ENCODE measurements at regions of chr11 and their contacts with region 1.

Region 1: GRCh38 chr11:67630228-67630942 is 648 bp upstream of the NUDT8 start:
- DNase-seq: peak; percentile 86 to 99 (median 94)
- ATAC-seq: peak; percentile 64
- H3K4me3 ChIP-seq: peak overlapping the region; percentile 90
- H3K4me3 Mint-ChIP-seq: peak overlapping the region; percentile 94
- H3K27ac ChIP-seq: peak overlapping the region; percentile 61 to 92
- H3K27ac Mint-ChIP-seq: peak overlapping the region; percentile 89
- H3K4me1 ChIP-seq: peaks cover 22% of the 10 kb centered on the region
- H3K4me1 Mint-ChIP-seq: peaks cover 6% of the 10 kb centered on the region
- H3K27me3 ChIP-seq: no peaks in the 10 kb centered on the region
- H3K27me3 Mint-ChIP-seq: no peaks in the 10 kb centered on the region
- CTCF ChIP-seq: peak; percentile 77

Region 2: DNA sequence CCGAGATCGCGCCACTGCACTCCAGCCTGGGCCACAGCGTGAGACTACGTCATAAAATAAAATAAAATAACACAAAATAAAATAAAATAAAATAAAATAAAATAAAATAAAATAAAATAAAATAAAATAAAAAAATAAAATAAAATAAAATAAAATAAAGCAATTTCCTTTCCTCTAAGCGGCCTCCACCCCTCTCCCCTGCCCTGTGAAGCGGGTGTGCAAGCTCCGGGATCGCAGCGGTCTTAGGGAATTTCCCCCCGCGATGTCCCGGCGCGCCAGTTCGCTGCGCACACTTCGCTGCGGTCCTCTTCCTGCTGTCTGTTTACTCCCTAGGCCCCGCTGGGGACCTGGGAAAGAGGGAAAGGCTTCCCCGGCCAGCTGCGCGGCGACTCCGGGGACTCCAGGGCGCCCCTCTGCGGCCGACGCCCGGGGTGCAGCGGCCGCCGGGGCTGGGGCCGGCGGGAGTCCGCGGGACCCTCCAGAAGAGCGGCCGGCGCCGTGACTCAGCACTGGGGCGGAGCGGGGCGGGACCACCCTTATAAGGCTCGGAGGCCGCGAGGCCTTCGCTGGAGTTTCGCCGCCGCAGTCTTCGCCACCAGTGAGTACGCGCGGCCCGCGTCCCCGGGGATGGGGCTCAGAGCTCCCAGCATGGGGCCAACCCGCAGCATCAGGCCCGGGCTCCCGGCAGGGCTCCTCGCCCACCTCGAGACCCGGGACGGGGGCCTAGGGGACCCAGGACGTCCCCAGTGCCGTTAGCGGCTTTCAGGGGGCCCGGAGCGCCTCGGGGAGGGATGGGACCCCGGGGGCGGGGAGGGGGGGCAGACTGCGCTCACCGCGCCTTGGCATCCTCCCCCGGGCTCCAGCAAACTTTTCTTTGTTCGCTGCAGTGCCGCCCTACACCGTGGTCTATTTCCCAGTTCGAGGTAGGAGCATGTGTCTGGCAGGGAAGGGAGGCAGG is 46.9 kb before region 1 on chr11 and contains the start of gene GSTP1:
- CTCF ChIA-PET with region 1: interaction called, 9 read pairs
- POLR2A ChIA-PET with region 1: interaction called, 16 read pairs
- intact Hi-C with region 1: no loop called
- DNase-seq: peak; percentile 54 to 90 (median 72)
- ATAC-seq: peak; percentile 77
- H3K4me3 ChIP-seq: peak within 1 kb of the TSS; percentile 58
- H3K4me3 Mint-ChIP-seq: peak within 1 kb of the TSS; percentile 92
- H3K27ac ChIP-seq: peak within 1 kb of the TSS; percentile 64 to 68
- H3K27ac Mint-ChIP-seq: peak within 1 kb of the TSS; percentile 85
- H3K4me1 ChIP-seq: peaks cover 34% of the 10 kb centered on the region
- H3K4me1 Mint-ChIP-seq: peaks cover 47% of the 10 kb centered on the region
- H3K27me3 ChIP-seq: peaks cover 0 to 3% of the 10 kb centered on the region in 2 experiments
- H3K27me3 Mint-ChIP-seq: no peaks in the 10 kb centered on the region
- CTCF ChIP-seq: peak; percentile 55
- total RNA-seq, gene GSTP1: 60.1 to 62.8 TPM

Region 3: GRCh38 chr11:67606492-67607201 is 23.7 kb before region 1 on chr11 and contains the start of gene NDUFV1:
- CTCF ChIA-PET with region 1: interaction called, 9 read pairs
- POLR2A ChIA-PET with region 1: interaction called, 3 read pairs
- intact Hi-C with region 1: loop called in 1 of 2 experiments (anchors 1 kb)
- DNase-seq: peak; percentile 93 to 98 (median 96)
- ATAC-seq: peak; percentile 98
- H3K4me3 ChIP-seq: peak within 1 kb of the TSS; percentile 83
- H3K4me3 Mint-ChIP-seq: peak within 1 kb of the TSS; percentile 88
- H3K27ac ChIP-seq: peak within 1 kb of the TSS; percentile 64 to 79
- H3K27ac Mint-ChIP-seq: peak within 1 kb of the TSS; percentile 70
- H3K4me1 ChIP-seq: peaks cover 23% of the 10 kb centered on the region
- H3K4me1 Mint-ChIP-seq: peaks cover 9% of the 10 kb centered on the region
- H3K27me3 ChIP-seq: peaks cover 0 to 3% of the 10 kb centered on the region in 2 experiments
- H3K27me3 Mint-ChIP-seq: peaks cover 11% of the 10 kb centered on the region
- CTCF ChIP-seq: peak; percentile 81
- total RNA-seq, gene NDUFV1: 223 to 224 TPM

Region 4: GRCh38 chr11:67613960-67614715 is 16.2 kb before region 1 on chr11:
- CTCF ChIA-PET with region 1: interaction called, 38 read pairs
- POLR2A ChIA-PET with region 1: interaction called, 27 read pairs
- intact Hi-C with region 1: loop called in 1 of 2 experiments (anchors 1 kb)
- DNase-seq: peak; percentile 67 to 94 (median 78)
- ATAC-seq: peak; percentile 96
- H3K4me3 ChIP-seq: peak overlapping the region; percentile 55
- H3K4me3 Mint-ChIP-seq: peak overlapping the region; percentile 89
- H3K27ac ChIP-seq: peak overlapping the region; percentile 92
- H3K27ac Mint-ChIP-seq: peak overlapping the region; percentile 96
- H3K4me1 ChIP-seq: peaks cover 37% of the 10 kb centered on the region
- H3K4me1 Mint-ChIP-seq: peaks cover 33% of the 10 kb centered on the region
- H3K27me3 ChIP-seq: peaks cover 0 to 3% of the 10 kb centered on the region in 2 experiments
- H3K27me3 Mint-ChIP-seq: no peaks in the 10 kb centered on the region
- CTCF ChIP-seq: peak; percentile 60

Region 5: GRCh38 chr11:67648140-67649123 is 18.0 kb after region 1 on chr11:
- CTCF ChIA-PET with region 1: interaction called, 9 read pairs
- POLR2A ChIA-PET with region 1: interaction called, 51 read pairs
- intact Hi-C with region 1: loop called in 1 of 2 experiments (anchors 1 kb)
- DNase-seq: peak; percentile 21 to 78 (median 51)
- ATAC-seq: peak; percentile 92
- H3K4me3 ChIP-seq: no peak overlapping the region
- H3K4me3 Mint-ChIP-seq: peak overlapping the region; percentile 76
- H3K27ac ChIP-seq: no peak overlapping the region
- H3K27ac Mint-ChIP-seq: peak overlapping the region; percentile 27
- H3K4me1 ChIP-seq: peaks cover 48% of the 10 kb centered on the region
- H3K4me1 Mint-ChIP-seq: peaks cover 32% of the 10 kb centered on the region
- H3K27me3 ChIP-seq: no peaks in the 10 kb centered on the region
- H3K27me3 Mint-ChIP-seq: no peaks in the 10 kb centered on the region
- CTCF ChIP-seq: peak; percentile 48

Region 6: DNA sequence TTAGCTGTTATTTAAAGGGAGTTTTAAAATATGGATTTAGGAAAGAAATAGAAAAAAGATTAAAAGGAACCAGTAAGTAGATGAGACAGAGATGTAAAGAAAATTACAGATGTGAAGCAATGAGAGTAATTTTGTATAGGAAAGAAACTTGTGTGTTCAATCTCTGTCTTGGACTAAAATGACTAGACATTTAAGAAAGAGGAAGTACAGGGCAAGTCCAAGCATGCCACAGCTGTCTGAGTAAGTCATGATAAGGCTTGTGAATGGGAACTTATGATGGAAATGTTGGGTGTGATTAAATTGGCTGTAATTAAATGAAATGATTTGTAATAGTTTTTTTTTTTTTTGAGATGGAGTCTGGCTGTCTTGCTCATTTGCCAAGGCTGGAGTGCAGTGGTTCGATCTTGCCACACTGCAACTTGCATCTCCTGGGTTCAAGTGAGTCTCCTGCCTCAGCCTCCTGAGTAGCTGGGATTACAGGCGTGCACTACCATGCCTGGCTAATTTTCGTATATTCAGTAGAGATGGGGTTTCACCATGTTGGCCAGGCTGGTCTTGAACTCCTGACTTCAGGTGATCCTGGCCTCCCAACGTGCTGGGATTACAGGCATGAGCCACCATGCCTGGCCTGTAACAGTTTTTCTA is 26.0 kb after region 1 on chr11:
- CTCF ChIA-PET with region 1: interaction called, 28 read pairs
- POLR2A ChIA-PET with region 1: interaction called, 51 read pairs
- intact Hi-C with region 1: loop called (anchors 1 kb)
- DNase-seq: peak in 1 of 14 experiments; percentile 14
- ATAC-seq: no peak
- H3K4me3 ChIP-seq: no peak overlapping the region
- H3K4me3 Mint-ChIP-seq: no peak overlapping the region
- H3K27ac ChIP-seq: no peak overlapping the region
- H3K27ac Mint-ChIP-seq: no peak overlapping the region
- H3K4me1 ChIP-seq: peaks cover 3% of the 10 kb centered on the region
- H3K4me1 Mint-ChIP-seq: no peaks in the 10 kb centered on the region
- H3K27me3 ChIP-seq: no peaks in the 10 kb centered on the region
- H3K27me3 Mint-ChIP-seq: no peaks in the 10 kb centered on the region
- CTCF ChIP-seq: no peak

Region 7: DNA sequence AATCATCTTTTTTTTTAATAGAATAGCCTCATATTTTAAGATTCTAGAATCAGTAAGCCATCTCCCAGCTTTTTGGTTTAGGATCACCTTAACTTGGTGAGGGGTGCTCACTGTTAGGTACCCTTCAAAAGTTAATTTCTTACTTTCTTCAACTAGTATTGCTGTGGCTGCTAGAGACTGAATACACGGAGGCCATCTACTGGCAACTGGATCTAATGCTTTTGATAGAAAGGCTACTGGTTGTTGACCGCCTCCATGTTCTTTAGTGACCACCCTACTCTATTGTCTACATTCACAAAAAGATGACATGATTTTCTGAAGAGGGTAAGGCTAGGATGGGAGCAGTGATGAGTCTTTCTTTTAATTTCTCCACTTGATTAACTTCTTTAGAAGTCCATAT is 60.8 kb after region 1 on chr11:
- CTCF ChIA-PET with region 1: no interaction called
- POLR2A ChIA-PET with region 1: no interaction called
- intact Hi-C with region 1: no loop called
- DNase-seq: no peak
- ATAC-seq: no peak
- H3K4me3 ChIP-seq: no peak overlapping the region
- H3K4me3 Mint-ChIP-seq: no peak overlapping the region
- H3K27ac ChIP-seq: no peak overlapping the region
- H3K27ac Mint-ChIP-seq: no peak overlapping the region
- H3K4me1 ChIP-seq: no peaks in the 10 kb centered on the region
- H3K4me1 Mint-ChIP-seq: no peaks in the 10 kb centered on the region
- H3K27me3 ChIP-seq: peaks cover 3 to 14% of the 10 kb centered on the region in 2 experiments
- H3K27me3 Mint-ChIP-seq: peaks cover 26% of the 10 kb centered on the region
- CTCF ChIP-seq: peak; percentile 27

Region 8: DNA sequence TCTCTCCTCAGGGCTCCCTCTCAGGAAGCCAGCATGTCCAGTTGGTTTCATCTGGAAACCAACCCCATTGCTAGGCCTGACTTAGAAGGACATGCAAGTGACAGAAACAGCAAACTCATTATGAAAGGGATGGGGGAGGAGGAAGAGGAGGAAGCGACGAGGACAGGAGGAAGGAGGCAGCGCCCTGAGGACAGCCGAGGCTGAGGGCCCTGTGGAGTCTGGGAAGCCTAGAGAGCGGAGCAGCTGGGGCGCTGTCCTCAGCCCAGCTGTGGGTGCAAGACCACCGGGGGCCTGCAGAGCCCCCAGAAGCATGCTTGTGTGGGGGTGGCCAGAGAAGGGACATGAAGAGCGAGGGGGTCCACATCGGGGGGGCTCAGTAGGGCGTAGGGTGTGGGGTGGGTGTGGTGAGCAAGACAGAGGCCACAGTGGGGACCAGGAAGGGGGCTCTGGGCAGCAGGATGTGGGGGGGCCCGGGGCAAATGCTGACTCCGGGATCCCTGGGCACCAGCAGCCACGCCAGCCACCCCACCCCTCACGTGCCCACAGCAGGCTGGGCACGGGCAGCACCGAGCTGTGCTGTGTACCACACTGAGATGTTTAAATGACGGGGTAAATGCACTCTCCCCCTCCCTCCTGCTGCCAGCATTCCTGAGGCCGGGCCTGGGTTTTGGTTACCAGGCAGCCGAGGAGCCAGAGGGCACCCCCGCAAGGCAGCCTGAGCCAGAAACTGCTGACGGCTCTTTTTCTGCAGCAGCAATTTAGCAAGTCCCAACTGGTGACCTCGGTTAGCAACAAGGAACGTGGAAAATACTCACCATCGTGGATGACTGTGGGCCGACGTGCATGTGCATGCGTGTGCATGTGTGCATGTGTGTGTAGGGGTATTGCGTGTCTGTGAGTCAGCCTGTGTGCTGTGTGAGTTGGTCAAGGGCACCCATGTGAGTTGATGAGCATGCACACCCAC is 1768.4 kb after region 1 on chr11:
- CTCF ChIA-PET with region 1: no interaction called
- POLR2A ChIA-PET with region 1: no interaction called
- intact Hi-C with region 1: no loop called
- DNase-seq: no peak
- ATAC-seq: no peak
- H3K4me3 ChIP-seq: no peak overlapping the region
- H3K4me3 Mint-ChIP-seq: no peak overlapping the region
- H3K27ac ChIP-seq: no peak overlapping the region
- H3K27ac Mint-ChIP-seq: no peak overlapping the region
- H3K4me1 ChIP-seq: peaks cover 3% of the 10 kb centered on the region
- H3K4me1 Mint-ChIP-seq: peaks cover 12% of the 10 kb centered on the region
- H3K27me3 ChIP-seq: no peaks in the 10 kb centered on the region
- H3K27me3 Mint-ChIP-seq: no peaks in the 10 kb centered on the region
- CTCF ChIP-seq: no peak